H1 (cell line): ENCODE measurements at regions of chr6 and their contacts with region 1.

Region 1: GRCh38 chr6:84568971-84569370 is 195.4 kb downstream of the TBX18 start:
- DNase-seq: no peak
- H3K4me3 ChIP-seq: no peak overlapping the region
- H3K27ac ChIP-seq: no peak overlapping the region
- H3K4me1 ChIP-seq: no peaks in the 10 kb centered on the region; a peak in 1 of 7 replicates
- H3K27me3 ChIP-seq: no peaks in the 10 kb centered on the region
- CTCF ChIP-seq: peak in 2 of 3 experiments; percentile 42 to 43; a peak in 2 of 4 replicates
- EP300 ChIP-seq: no peak
- POLR2A ChIP-seq: no peak
- RAD21 ChIP-seq: peak; percentile 68 to 75

Region 2: GRCh38 chr6:84428300-84428907 is 140.6 kb before region 1 on chr6:
- CTCF ChIA-PET with region 1: interaction called, 17 read pairs
- POLR2A ChIA-PET with region 1: no interaction called
- DNase-seq: peak in 1 of 2 experiments; percentile 60
- H3K4me3 ChIP-seq: no peak overlapping the region
- H3K27ac ChIP-seq: no peak overlapping the region
- H3K4me1 ChIP-seq: peaks cover 0 to 7% (median 2%) of the 10 kb centered on the region in 4 experiments; a peak in 2 of 7 replicates
- H3K27me3 ChIP-seq: no peaks in the 10 kb centered on the region
- CTCF ChIP-seq: peak; percentile 78 to 82 (median 81)
- EP300 ChIP-seq: no peak
- POLR2A ChIP-seq: no peak
- RAD21 ChIP-seq: peak; percentile 85

Region 3: GRCh38 chr6:84556541-84557335 is 12.2 kb before region 1 on chr6:
- CTCF ChIA-PET with region 1: no interaction called
- POLR2A ChIA-PET with region 1: no interaction called
- DNase-seq: no peak
- H3K4me3 ChIP-seq: no peak overlapping the region
- H3K27ac ChIP-seq: no peak overlapping the region
- H3K4me1 ChIP-seq: no peaks in the 10 kb centered on the region
- H3K27me3 ChIP-seq: peaks cover 0 to 2% (median 0%) of the 10 kb centered on the region in 4 experiments; a peak in 1 of 7 replicates
- CTCF ChIP-seq: no peak
- EP300 ChIP-seq: no peak
- POLR2A ChIP-seq: no peak
- RAD21 ChIP-seq: no peak